ENCODE measurements at regions of chr5 and their contacts with region 1.

Region 1: DNA sequence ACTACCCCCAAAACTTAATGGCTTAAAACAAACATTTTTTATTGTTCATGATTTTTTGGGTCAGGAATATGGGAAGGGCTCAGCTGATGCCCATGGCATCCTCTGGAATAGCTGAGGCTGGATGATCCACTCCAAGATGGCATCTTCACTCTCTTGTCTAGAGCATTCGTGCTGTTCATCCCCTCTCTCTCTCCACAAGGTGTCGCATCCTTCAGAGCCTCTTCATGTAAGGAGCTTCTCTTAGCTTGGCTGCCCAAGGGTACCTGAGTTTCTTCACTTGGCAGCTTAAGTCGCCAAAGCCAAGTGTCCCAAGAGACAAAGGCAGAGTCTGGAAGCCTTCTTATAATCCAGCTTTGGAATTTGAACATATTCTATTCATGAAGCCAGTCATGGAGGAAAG is 294.7 kb downstream of the CHSY3 start:
- DNase-seq: peak; percentile 48
- ATAC-seq: peak; percentile 98
- H3K4me3 ChIP-seq: no peak overlapping the region
- H3K27ac ChIP-seq: no peak overlapping the region
- H3K4me1 ChIP-seq: no peaks in the 10 kb centered on the region
- H3K27me3 ChIP-seq: no peaks in the 10 kb centered on the region
- CTCF ChIP-seq: peak; percentile 45 to 66 (median 64); a peak in 5 of 6 replicates
- POLR2A ChIP-seq: no peak
- RAD21 ChIP-seq: peak; percentile 64

Region 2: DNA sequence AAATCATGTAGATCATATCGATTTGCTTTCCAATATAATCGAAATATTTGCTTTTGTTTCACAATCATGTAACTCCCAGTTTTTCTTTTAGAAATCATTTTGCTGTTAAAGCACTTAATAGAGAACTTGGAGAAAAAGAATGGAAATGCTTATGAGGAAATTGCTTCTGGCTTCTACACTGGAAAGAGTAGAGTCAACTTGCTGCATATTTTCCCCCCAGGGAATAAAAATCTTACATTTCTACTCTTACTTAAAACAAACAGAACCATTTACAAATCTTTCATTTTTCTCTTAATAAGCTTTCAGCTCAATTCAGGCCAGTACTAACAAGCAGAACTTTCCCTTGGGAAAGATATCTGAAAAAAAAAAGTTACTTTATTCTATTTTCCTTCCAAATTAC is 17.4 kb after region 1 on chr5:
- CTCF ChIA-PET with region 1: interaction called, 17 read pairs
- POLR2A ChIA-PET with region 1: no interaction called
- RAD21 ChIA-PET with region 1: no interaction called
- intact Hi-C with region 1: no loop called
- DNase-seq: no peak
- ATAC-seq: no peak
- H3K4me3 ChIP-seq: no peak overlapping the region
- H3K27ac ChIP-seq: no peak overlapping the region
- H3K4me1 ChIP-seq: no peaks in the 10 kb centered on the region
- H3K27me3 ChIP-seq: no peaks in the 10 kb centered on the region
- CTCF ChIP-seq: no peak
- POLR2A ChIP-seq: no peak
- RAD21 ChIP-seq: no peak

Region 3: GRCh38 chr5:130692770-130693169 is 493.8 kb after region 1 on chr5:
- CTCF ChIA-PET with region 1: no interaction called
- POLR2A ChIA-PET with region 1: no interaction called
- RAD21 ChIA-PET with region 1: no interaction called
- intact Hi-C with region 1: loop called (anchors 2 kb)
- DNase-seq: no peak
- ATAC-seq: no peak
- H3K4me3 ChIP-seq: no peak overlapping the region
- H3K27ac ChIP-seq: no peak overlapping the region
- H3K4me1 ChIP-seq: no peaks in the 10 kb centered on the region
- H3K27me3 ChIP-seq: no peaks in the 10 kb centered on the region
- CTCF ChIP-seq: no peak
- POLR2A ChIP-seq: no peak
- RAD21 ChIP-seq: no peak

Region 4: GRCh38 chr5:130720355-130720754 is 521.4 kb after region 1 on chr5:
- CTCF ChIA-PET with region 1: interaction called, 4 read pairs
- POLR2A ChIA-PET with region 1: no interaction called
- RAD21 ChIA-PET with region 1: no interaction called
- intact Hi-C with region 1: loop called (anchors 1 kb)
- DNase-seq: peak; percentile 45
- ATAC-seq: peak; percentile 100
- H3K4me3 ChIP-seq: no peak overlapping the region
- H3K27ac ChIP-seq: no peak overlapping the region
- H3K4me1 ChIP-seq: no peaks in the 10 kb centered on the region
- H3K27me3 ChIP-seq: no peaks in the 10 kb centered on the region
- CTCF ChIP-seq: peak; percentile 56 to 74 (median 69); a peak in 5 of 6 replicates
- POLR2A ChIP-seq: no peak
- RAD21 ChIP-seq: peak; percentile 88

Region 5: GRCh38 chr5:130912088-130912487 is 713.2 kb after region 1 on chr5:
- CTCF ChIA-PET with region 1: interaction called, 6 read pairs
- POLR2A ChIA-PET with region 1: no interaction called
- RAD21 ChIA-PET with region 1: no interaction called
- intact Hi-C with region 1: loop called (anchors 5 kb)
- DNase-seq: peak; percentile 19
- ATAC-seq: peak; percentile 71
- H3K4me3 ChIP-seq: no peak overlapping the region
- H3K27ac ChIP-seq: no peak overlapping the region
- H3K4me1 ChIP-seq: no peaks in the 10 kb centered on the region
- H3K27me3 ChIP-seq: no peaks in the 10 kb centered on the region
- CTCF ChIP-seq: peak; percentile 54 to 72 (median 63); a peak in 5 of 6 replicates
- POLR2A ChIP-seq: no peak
- RAD21 ChIP-seq: peak; percentile 85